ENCODE measurements at regions of chr21 and their contacts with region 1.

Region 1: DNA sequence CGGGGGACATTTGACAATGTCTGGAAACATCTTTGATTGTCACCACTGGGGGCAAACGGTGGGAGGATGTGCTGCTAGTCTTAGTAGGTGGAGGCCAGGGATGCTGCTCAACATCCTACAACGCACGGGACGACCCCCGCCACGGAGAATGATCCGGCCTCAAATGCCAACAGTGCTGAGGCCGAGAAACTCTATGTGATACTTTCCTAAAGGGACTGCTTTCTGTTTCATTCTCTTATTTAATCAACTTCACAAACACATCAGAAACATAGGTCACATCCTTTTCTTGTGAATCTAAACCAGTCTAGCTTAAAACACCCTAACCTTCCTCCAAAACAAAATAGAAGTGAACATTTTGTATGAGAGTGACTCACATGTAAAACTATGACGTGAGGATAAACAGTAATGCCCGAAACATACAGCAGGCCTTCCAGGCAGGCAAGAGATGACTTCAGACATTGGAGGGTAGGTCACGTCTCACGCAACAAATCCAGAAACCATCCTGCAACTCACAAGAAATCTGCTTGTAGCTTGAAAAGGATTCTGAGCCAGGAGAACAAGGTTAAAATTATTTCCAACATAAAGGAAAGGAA is 37.2 kb upstream of the ETS2 start:
- DNase-seq: peak; percentile 42
- H3K4me3 Mint-ChIP-seq: peak overlapping the region; percentile 78
- H3K27ac Mint-ChIP-seq: peak overlapping the region; percentile 97
- H3K4me1 Mint-ChIP-seq: peaks cover 37% of the 10 kb centered on the region
- H3K27me3 Mint-ChIP-seq: peaks cover 23% of the 10 kb centered on the region

Region 2: GRCh38 chr21:38805328-38806152 is 37.0 kb after region 1 on chr21 and contains the start of gene ETS2:
- CTCF ChIA-PET with region 1: interaction called, 4 read pairs
- POLR2A ChIA-PET with region 1: interaction called, 13 read pairs
- DNase-seq: peak; percentile 76
- H3K4me3 Mint-ChIP-seq: peak within 1 kb of the TSS; percentile 81
- H3K27ac Mint-ChIP-seq: peak within 1 kb of the TSS; percentile 49
- H3K4me1 Mint-ChIP-seq: peaks cover 28% of the 10 kb centered on the region
- H3K27me3 Mint-ChIP-seq: peaks cover 13% of the 10 kb centered on the region
- total RNA-seq, gene ETS2: 11.4 to 11.5 TPM

Measured in activated CD4-positive, alpha-beta memory T cell treated with anti-CD3 and anti-CD28 coated beads, Interleukin-2, amount 10 ng/mL, durations not matched to agents 7 days and 5 days (primary cell).